Activated CD4-positive, alpha-beta T cell treated with anti-CD3 and anti-CD28 coated beads for 36 hours (primary cell): ENCODE measurements at regions of chr3 and their contacts with region 1.

Region 1: GRCh38 chr3:59386165-59386564 is 336.3 kb upstream of the CFAP20DC start:
- DNase-seq: no peak
- ATAC-seq: peak; percentile 28
- H3K4me3 Mint-ChIP-seq: peak overlapping the region; percentile 31
- H3K27ac Mint-ChIP-seq: peak overlapping the region; percentile 99
- H3K4me1 Mint-ChIP-seq: peaks cover 86% of the 10 kb centered on the region
- H3K27me3 Mint-ChIP-seq: no peaks in the 10 kb centered on the region

Region 2: DNA sequence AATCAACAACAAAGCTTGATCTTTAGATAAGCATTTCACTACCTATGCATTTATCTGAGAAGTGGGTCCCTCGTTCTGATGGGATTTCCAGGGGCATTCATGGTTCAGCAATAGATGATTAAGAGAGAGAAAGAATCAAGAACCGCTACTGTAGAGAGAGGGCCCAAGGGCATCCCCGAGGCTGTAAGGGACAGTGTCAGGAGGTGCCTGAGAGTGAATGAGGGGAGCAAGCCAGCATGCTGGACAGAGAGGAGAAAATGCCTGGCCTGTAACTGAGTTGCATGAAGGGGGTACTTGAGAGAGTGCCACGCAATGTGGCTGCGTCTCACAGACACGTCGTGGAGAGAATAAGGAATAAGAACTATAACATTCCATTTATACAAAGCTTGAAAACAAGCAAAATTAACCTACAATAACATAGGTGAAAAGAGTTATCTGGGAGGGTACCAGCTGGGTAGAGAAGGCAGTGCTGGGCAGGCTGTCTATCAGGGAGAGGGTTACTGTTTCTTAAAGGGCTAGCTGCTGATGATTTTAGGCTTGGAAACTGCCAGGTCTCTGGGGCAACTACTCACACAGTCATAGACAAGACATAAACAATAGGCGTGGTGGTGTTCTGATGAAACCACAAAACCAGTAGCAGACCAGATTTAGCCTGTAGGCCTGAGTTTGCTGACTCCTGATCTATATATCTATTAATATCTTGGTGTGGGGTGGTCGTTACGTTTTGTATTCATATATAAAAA is 38.3 kb after region 1 on chr3:
- CTCF ChIA-PET with region 1: interaction called, 9 read pairs
- POLR2A ChIA-PET with region 1: interaction called, 3 read pairs
- intact Hi-C with region 1: loop called (anchors 1 kb)
- DNase-seq: peak; percentile 35
- ATAC-seq: no peak
- H3K4me3 Mint-ChIP-seq: peak overlapping the region; percentile 8
- H3K27ac Mint-ChIP-seq: peak overlapping the region; percentile 68
- H3K4me1 Mint-ChIP-seq: peaks cover 74% of the 10 kb centered on the region
- H3K27me3 Mint-ChIP-seq: peaks cover 10% of the 10 kb centered on the region

Region 3: GRCh38 chr3:59469948-59470723 is 84.0 kb after region 1 on chr3:
- CTCF ChIA-PET with region 1: no interaction called
- POLR2A ChIA-PET with region 1: no interaction called
- intact Hi-C with region 1: loop called in 1 of 2 experiments (anchors 1 kb)
- DNase-seq: peak; percentile 59
- ATAC-seq: peak; percentile 86
- H3K4me3 Mint-ChIP-seq: no peak overlapping the region
- H3K27ac Mint-ChIP-seq: peak overlapping the region; percentile 59
- H3K4me1 Mint-ChIP-seq: peaks cover 28% of the 10 kb centered on the region
- H3K27me3 Mint-ChIP-seq: peaks cover 2% of the 10 kb centered on the region

Region 4: DNA sequence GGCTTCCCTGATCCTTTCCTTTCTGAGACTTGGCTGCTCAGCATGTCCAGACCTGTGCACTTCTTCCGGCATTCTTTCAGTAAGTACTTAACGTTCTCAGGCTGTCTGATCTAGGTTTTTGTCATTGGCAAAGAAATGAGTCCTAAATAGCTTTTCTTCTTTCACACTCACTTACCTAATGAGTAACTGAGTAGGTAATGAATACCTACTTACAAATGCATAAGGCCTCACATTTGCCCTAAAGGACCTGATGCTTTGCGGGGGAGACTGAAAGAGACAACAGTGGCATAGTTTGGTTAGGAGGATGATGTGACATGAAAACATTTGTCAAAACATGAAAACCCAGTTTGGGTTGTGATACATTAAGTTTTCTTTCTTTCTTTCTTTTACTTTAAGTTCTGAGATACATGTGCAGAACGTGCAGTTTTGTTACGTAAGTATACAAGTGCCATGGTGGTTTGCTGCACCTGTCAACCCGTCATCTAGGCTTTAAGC is 180.4 kb after region 1 on chr3:
- CTCF ChIA-PET with region 1: no interaction called
- POLR2A ChIA-PET with region 1: no interaction called
- intact Hi-C with region 1: loop called (anchors 1 kb)
- DNase-seq: peak; percentile 46
- ATAC-seq: peak; percentile 98
- H3K4me3 Mint-ChIP-seq: no peak overlapping the region
- H3K27ac Mint-ChIP-seq: peak overlapping the region; percentile 45
- H3K4me1 Mint-ChIP-seq: peaks cover 17% of the 10 kb centered on the region
- H3K27me3 Mint-ChIP-seq: peaks cover 4% of the 10 kb centered on the region

Region 5: GRCh38 chr3:59866076-59866475 is 479.9 kb after region 1 on chr3:
- CTCF ChIA-PET with region 1: no interaction called
- POLR2A ChIA-PET with region 1: no interaction called
- intact Hi-C with region 1: loop called (anchors 1 to 10 kb)
- DNase-seq: no peak
- ATAC-seq: no peak
- H3K4me3 Mint-ChIP-seq: no peak overlapping the region
- H3K27ac Mint-ChIP-seq: no peak overlapping the region
- H3K4me1 Mint-ChIP-seq: peaks cover 42% of the 10 kb centered on the region
- H3K27me3 Mint-ChIP-seq: no peaks in the 10 kb centered on the region

Region 6: DNA sequence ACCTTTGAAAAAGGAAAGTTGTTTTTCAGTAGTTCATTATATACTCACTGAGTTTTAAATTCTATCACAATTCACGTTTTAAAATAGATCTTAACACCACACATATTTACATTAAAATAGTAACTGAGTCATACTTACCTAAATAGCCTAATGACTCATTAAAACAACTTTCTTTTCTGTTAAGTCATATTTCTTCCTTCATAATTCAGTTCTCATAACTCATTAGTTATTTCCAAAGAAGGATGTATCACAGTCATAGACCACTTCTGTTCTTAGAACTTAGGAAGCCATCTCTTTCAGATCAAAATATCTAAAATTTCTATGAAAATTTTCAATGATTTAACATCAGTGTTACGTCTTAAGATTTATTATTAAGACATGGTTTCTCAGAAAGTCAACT is 979.2 kb after region 1 on chr3:
- CTCF ChIA-PET with region 1: no interaction called
- POLR2A ChIA-PET with region 1: no interaction called
- intact Hi-C with region 1: loop called in 1 of 2 experiments (anchors 5 kb)
- DNase-seq: no peak
- ATAC-seq: peak; percentile 81
- H3K4me3 Mint-ChIP-seq: no peak overlapping the region
- H3K27ac Mint-ChIP-seq: no peak overlapping the region
- H3K4me1 Mint-ChIP-seq: peaks cover 28% of the 10 kb centered on the region
- H3K27me3 Mint-ChIP-seq: no peaks in the 10 kb centered on the region